Mammary epithelial cell (primary cell): ENCODE measurements at regions of chr20 and their contacts with region 1.

Region 1: GRCh38 chr20:41587956-41588355 is 30.2 kb downstream of the CHD6 start:
- DNase-seq: peak; percentile 72
- H3K4me3 ChIP-seq: no peak overlapping the region
- H3K27ac ChIP-seq: no peak overlapping the region
- H3K4me1 ChIP-seq: peaks cover 16% of the 10 kb centered on the region
- H3K27me3 ChIP-seq: no peaks in the 10 kb centered on the region
- CTCF ChIP-seq: no peak

Region 2: GRCh38 chr20:41524980-41525613 is 62.9 kb before region 1 on chr20:
- CTCF ChIA-PET with region 1: no interaction called
- dilution Hi-C with region 1: no loop called
- in situ Hi-C with region 1: no loop called
- intact Hi-C with region 1: loop called (anchors 1 kb)
- DNase-seq: peak; percentile 68
- H3K4me3 ChIP-seq: peak overlapping the region in 1 of 3 experiments; percentile 37
- H3K27ac ChIP-seq: no peak overlapping the region
- H3K4me1 ChIP-seq: peaks cover 5% of the 10 kb centered on the region
- H3K27me3 ChIP-seq: no peaks in the 10 kb centered on the region
- CTCF ChIP-seq: no peak